Activated CD4-positive, alpha-beta T cell treated with anti-CD3 and anti-CD28 coated beads for 36 hours (primary cell): ENCODE measurements at regions of chrX and their contacts with region 1.

Region 1: DNA sequence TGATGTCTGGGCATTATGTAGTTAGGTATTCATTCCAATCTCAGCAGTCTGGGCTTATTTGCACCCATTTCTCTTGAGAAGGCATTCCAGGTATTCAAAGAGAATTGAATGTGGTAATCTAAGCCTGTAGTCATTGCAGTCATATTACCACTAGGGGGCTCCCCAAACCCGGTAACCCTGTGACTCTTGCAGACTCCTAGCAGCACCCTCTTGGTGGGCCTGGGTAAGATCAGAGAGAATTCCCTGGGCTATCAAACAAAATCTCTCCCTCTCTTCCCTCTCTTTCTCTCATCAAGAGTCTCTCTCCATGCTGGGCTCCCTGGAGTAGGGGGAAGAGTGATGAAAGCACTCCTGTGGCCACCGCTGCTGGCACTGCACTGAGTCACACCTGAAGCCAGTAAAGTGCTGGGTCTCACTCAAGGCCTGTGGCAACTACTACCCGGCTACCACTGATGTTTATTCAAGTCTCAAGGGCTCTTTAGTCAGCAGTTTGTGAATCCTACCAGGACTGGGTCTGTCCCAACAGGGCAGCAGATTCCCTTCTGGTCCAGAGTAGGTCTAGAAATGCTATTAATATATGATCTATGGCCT is 187.7 kb upstream of the NUDT10 start:
- DNase-seq: peak; percentile 50
- ATAC-seq: no peak
- H3K4me3 Mint-ChIP-seq: no peak overlapping the region
- H3K27ac Mint-ChIP-seq: no peak overlapping the region
- H3K4me1 Mint-ChIP-seq: no peaks in the 10 kb centered on the region
- H3K27me3 Mint-ChIP-seq: peaks cover 13% of the 10 kb centered on the region

Region 2: GRCh38 chrX:50962156-50962555 is 182.8 kb before region 1 on chrX:
- CTCF ChIA-PET with region 1: no interaction called
- POLR2A ChIA-PET with region 1: no interaction called
- intact Hi-C with region 1: no loop called
- DNase-seq: no peak
- ATAC-seq: no peak
- H3K4me3 Mint-ChIP-seq: no peak overlapping the region
- H3K27ac Mint-ChIP-seq: no peak overlapping the region
- H3K4me1 Mint-ChIP-seq: no peaks in the 10 kb centered on the region
- H3K27me3 Mint-ChIP-seq: no peaks in the 10 kb centered on the region

Region 3: GRCh38 chrX:51169410-51169809 is 24.5 kb after region 1 on chrX:
- CTCF ChIA-PET with region 1: interaction called, 3 read pairs
- POLR2A ChIA-PET with region 1: no interaction called
- intact Hi-C with region 1: loop called in 1 of 2 experiments (anchors 1 kb)
- DNase-seq: no peak
- ATAC-seq: no peak
- H3K4me3 Mint-ChIP-seq: no peak overlapping the region
- H3K27ac Mint-ChIP-seq: no peak overlapping the region
- H3K4me1 Mint-ChIP-seq: no peaks in the 10 kb centered on the region
- H3K27me3 Mint-ChIP-seq: no peaks in the 10 kb centered on the region

Region 4: GRCh38 chrX:51281758-51282318 is 136.9 kb after region 1 on chrX:
- CTCF ChIA-PET with region 1: no interaction called
- POLR2A ChIA-PET with region 1: no interaction called
- intact Hi-C with region 1: no loop called
- DNase-seq: no peak
- ATAC-seq: peak; percentile 44
- H3K4me3 Mint-ChIP-seq: no peak overlapping the region
- H3K27ac Mint-ChIP-seq: no peak overlapping the region
- H3K4me1 Mint-ChIP-seq: no peaks in the 10 kb centered on the region
- H3K27me3 Mint-ChIP-seq: no peaks in the 10 kb centered on the region

Region 5: GRCh38 chrX:51336584-51336983 is 191.6 kb after region 1 on chrX:
- CTCF ChIA-PET with region 1: no interaction called
- POLR2A ChIA-PET with region 1: no interaction called
- intact Hi-C with region 1: loop called in 1 of 2 experiments (anchors 5 kb)
- DNase-seq: peak; percentile 39
- ATAC-seq: peak; percentile 58
- H3K4me3 Mint-ChIP-seq: no peak overlapping the region
- H3K27ac Mint-ChIP-seq: no peak overlapping the region
- H3K4me1 Mint-ChIP-seq: peaks cover 1% of the 10 kb centered on the region
- H3K27me3 Mint-ChIP-seq: peaks cover 3% of the 10 kb centered on the region